Activated naive CD4-positive, alpha-beta T cell treated with anti-CD3 and anti-CD28 coated beads for 36 hours (primary cell): ENCODE measurements at regions of chr13 and their contacts with region 1.

Region 1: DNA sequence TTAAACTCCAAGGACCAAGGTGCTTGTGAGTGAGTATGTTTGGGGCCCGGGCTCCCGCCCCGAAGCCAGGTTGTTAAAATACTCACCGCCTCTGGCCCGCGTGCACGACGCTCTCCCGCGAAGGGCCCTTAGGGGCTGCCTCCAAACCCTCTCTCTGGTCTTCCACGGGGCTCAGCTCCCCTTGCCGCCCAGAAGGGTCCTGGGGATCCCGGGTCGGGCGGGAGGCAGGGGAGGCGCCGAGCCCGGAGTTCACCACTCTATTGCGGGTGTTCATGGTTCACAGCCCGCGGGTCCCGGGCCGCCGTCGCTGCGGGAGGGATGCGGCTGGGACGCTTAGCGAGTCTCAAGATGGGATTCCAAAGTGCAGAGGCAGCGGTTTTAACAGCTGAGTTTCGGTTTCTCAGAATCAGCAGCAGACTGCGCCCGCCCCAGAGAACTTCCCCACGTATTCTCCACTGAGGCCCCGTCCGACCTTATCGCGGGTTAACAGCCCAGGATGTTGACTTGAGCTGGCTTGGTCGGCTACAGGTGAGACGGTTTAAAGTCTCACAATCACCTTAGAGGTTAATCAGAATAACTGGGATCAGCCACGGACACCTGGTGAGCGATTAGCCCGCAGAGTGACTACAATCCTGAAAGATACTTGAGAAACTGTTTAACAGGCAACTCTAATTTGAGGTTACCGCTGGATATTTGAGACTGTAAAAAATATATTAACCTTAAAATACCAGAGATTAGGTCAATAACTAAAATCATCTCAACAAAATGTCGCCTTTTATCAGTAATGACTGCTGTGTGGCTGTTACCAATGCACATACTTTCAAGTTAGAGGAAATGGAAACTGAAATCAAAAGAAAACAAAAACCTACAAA is at the start of gene EPSTI1:
- DNase-seq: peak; percentile 84
- H3K4me3 Mint-ChIP-seq: peak within 1 kb of the TSS; percentile 87
- H3K27ac Mint-ChIP-seq: peak within 1 kb of the TSS; percentile 98
- H3K4me1 Mint-ChIP-seq: peaks cover 52% of the 10 kb centered on the region
- H3K27me3 Mint-ChIP-seq: no peaks in the 10 kb centered on the region
- total RNA-seq, gene EPSTI1: 17.4 to 19.8 TPM

Region 2: DNA sequence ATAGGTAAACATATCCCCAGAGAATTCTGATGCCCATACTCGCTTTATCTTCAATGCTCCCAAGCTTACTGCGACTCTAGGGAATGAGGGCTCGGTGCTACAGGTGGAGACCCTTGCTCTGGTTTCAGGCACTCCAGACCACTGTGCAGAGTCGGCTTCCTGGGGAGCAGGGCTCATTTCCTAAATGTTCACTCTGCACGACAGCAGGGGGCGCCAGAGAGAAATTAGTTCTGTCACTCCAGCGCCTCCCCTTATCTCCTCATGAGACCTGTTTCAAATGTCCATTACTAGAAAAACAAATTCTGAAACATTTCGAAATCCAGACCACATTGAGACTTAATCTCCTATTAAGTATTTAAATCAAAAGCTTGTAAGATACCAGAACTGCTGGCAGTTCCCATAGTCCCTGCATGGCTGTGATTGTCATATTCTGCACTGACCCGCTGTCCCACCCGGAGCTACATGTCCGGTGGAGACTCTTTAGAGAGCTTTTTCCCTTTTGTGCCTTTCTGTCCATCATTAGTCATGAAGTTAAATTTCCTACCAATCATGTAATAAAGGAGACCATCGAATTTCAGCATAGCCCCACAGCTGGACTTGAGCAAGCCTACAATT is 22.5 kb before region 1 on chr13:
- CTCF ChIA-PET with region 1: interaction called, 20 read pairs
- intact Hi-C with region 1: loop called (anchors 1 kb)
- DNase-seq: peak; percentile 88
- H3K4me3 Mint-ChIP-seq: no peak overlapping the region
- H3K27ac Mint-ChIP-seq: no peak overlapping the region
- H3K4me1 Mint-ChIP-seq: peaks cover 8% of the 10 kb centered on the region
- H3K27me3 Mint-ChIP-seq: no peaks in the 10 kb centered on the region

Region 3: DNA sequence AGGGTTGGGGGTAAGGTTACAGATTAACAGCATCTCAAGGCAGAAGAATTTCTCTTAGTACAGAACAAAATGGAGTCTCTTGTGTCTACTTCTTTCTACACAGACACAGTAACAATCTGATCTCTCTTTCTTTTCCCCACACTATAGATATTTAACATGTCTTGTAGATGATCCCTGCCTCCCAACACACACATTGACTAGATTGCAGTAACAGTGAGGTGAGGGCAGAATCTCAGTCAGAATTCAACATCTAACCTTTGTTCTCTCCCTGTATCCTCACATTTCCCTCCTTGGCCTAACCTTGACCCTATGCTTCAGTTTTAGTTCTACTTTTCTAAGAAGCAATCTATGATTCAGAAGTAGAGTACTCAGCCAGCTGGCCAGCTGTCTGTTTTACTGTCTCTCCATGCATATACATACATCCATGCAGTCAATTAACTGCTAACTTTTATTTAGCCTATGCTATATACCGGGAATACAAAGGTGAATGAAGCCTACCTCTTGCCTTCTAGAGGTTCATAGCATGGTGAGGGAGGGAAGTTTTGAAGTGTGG is 49.3 kb after region 1 on chr13:
- CTCF ChIA-PET with region 1: interaction called, 3 read pairs
- intact Hi-C with region 1: loop called (anchors 1 kb)
- DNase-seq: no peak
- H3K4me3 Mint-ChIP-seq: no peak overlapping the region
- H3K27ac Mint-ChIP-seq: no peak overlapping the region
- H3K4me1 Mint-ChIP-seq: peaks cover 64% of the 10 kb centered on the region
- H3K27me3 Mint-ChIP-seq: no peaks in the 10 kb centered on the region

Region 4: DNA sequence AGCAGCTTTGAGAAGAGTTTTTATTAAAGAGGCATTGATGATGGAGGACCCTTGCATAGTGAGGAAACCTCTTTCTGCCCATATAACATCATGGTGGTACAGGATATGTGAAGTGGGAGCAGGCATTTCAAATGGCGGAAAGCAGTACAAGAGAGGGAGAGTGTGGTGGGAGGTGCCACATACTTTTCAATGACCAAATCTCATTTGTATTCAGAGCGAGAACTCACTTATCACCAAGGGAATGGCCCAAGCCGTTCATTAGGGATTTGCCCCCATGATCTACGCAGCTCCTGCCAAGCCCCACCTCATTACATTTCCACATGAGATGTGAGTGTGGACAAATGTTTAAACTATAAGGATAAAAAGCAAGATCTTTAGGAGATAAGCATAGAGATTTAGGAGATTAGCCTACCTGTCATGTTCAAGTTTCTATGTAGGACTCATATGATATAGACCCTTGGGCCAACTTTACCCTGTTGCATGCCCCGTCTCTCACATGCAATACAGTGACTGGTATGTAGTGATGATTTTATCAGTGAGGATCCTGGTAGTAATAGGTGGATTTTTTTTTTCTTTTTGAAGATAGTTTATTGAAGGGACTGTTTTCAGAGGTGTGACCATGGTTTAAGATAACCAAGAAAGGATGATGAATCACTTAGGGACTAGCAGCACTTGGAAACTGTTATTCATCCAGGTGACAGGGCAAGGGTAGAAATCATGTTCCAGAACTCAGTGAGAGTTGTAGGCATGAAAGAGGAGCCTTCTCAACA is 69.6 kb after region 1 on chr13:
- CTCF ChIA-PET with region 1: no interaction called
- intact Hi-C with region 1: loop called (anchors 1 kb)
- DNase-seq: peak; percentile 57
- H3K4me3 Mint-ChIP-seq: no peak overlapping the region
- H3K27ac Mint-ChIP-seq: peak overlapping the region; percentile 67
- H3K4me1 Mint-ChIP-seq: peaks cover 59% of the 10 kb centered on the region
- H3K27me3 Mint-ChIP-seq: no peaks in the 10 kb centered on the region

Region 5: DNA sequence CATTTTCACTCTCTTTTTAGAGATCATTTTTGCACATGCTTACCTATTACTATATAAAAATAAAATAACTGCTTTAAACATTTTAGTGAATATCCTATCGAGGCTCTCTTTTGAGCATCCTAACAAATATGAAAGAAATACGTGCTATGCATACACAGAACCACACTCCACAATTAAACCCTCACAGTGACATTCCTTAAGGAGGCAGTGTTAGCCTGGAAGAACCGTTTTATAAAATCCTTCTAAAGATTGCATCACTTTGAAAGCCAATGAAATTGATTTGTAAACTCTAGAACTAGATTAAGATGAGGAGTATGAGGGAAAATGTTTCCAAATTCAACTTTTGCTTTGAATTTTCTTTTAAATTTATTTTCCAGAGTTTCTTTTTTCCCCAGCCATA is 805.7 kb after region 1 on chr13:
- CTCF ChIA-PET with region 1: no interaction called
- intact Hi-C with region 1: loop called (anchors 1 kb)
- DNase-seq: no peak
- H3K4me3 Mint-ChIP-seq: no peak overlapping the region
- H3K27ac Mint-ChIP-seq: no peak overlapping the region
- H3K4me1 Mint-ChIP-seq: peaks cover 30% of the 10 kb centered on the region
- H3K27me3 Mint-ChIP-seq: peaks cover 22% of the 10 kb centered on the region